ENCODE measurements at regions of chr9 and their contacts with region 1.

Region 1: DNA sequence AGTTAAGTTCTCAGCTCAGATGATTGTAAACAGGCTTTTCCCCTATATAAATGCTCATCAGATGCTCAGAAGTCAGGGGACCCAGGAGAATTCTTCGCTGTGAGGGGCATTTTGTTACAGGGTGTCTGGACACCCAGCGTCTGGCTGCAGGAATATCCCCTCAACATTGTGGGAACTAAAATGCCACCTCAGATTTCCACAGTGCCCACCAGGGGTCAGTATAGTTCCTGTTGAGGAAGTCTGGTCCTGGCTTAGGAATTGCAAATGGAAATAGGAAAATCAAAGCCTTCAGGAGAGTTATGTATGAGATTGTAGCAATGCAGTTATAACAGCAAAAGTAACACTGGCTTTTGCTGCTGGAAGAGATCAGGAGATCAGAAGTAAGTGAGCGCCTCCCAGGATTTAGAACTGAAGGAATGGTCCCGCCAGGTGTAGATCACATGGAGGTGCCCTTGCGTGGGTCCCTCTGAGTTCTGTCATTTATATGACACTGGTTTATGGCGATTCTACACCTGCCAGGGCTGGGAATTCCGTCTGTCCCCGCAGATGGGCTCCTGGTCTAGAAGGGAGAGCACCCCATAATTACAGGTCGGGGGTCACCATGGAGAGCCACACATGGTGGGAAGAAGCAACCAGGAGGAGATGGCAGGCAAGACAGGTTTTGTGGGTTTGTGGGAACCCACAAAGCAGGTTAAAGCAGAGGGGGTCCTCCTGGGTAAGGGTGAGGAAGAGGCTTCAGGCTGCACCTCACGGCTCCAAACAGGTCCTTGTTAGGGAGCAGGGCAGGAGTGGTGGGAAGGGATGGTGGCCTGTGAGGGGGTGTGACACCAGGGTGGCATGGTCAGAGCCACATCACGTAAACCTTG is 47.0 kb upstream of the CTSL start:
- DNase-seq: peak; percentile 24
- ATAC-seq: no peak
- H3K4me3 ChIP-seq: no peak overlapping the region
- H3K4me3 Mint-ChIP-seq: no peak overlapping the region
- H3K27ac ChIP-seq: no peak overlapping the region
- H3K27ac Mint-ChIP-seq: no peak overlapping the region
- H3K4me1 ChIP-seq: no peaks in the 10 kb centered on the region
- H3K4me1 Mint-ChIP-seq: no peaks in the 10 kb centered on the region
- H3K27me3 ChIP-seq: no peaks in the 10 kb centered on the region
- H3K27me3 Mint-ChIP-seq: peaks cover 4% of the 10 kb centered on the region
- CTCF ChIP-seq: peak; percentile 53

Region 2: GRCh38 chr9:88578121-88579054 is 899.5 kb after region 1 on chr9:
- CTCF ChIA-PET with region 1: no interaction called
- POLR2A ChIA-PET with region 1: no interaction called
- intact Hi-C with region 1: loop called (anchors 5 kb)
- DNase-seq: peak; percentile 63
- ATAC-seq: peak; percentile 65
- H3K4me3 ChIP-seq: peak overlapping the region in 2 of 5 experiments; percentile 8 to 37
- H3K4me3 Mint-ChIP-seq: peak overlapping the region; percentile 47
- H3K27ac ChIP-seq: no peak overlapping the region
- H3K27ac Mint-ChIP-seq: no peak overlapping the region
- H3K4me1 ChIP-seq: peaks cover 4 to 6% of the 10 kb centered on the region in 2 donors
- H3K4me1 Mint-ChIP-seq: peaks cover 4% of the 10 kb centered on the region
- H3K27me3 ChIP-seq: no peaks in the 10 kb centered on the region
- H3K27me3 Mint-ChIP-seq: peaks cover 19% of the 10 kb centered on the region
- CTCF ChIP-seq: peak; percentile 92